GM12878 (cell line): ENCODE measurements at regions of chr3 and their contacts with region 1.

Region 1: DNA sequence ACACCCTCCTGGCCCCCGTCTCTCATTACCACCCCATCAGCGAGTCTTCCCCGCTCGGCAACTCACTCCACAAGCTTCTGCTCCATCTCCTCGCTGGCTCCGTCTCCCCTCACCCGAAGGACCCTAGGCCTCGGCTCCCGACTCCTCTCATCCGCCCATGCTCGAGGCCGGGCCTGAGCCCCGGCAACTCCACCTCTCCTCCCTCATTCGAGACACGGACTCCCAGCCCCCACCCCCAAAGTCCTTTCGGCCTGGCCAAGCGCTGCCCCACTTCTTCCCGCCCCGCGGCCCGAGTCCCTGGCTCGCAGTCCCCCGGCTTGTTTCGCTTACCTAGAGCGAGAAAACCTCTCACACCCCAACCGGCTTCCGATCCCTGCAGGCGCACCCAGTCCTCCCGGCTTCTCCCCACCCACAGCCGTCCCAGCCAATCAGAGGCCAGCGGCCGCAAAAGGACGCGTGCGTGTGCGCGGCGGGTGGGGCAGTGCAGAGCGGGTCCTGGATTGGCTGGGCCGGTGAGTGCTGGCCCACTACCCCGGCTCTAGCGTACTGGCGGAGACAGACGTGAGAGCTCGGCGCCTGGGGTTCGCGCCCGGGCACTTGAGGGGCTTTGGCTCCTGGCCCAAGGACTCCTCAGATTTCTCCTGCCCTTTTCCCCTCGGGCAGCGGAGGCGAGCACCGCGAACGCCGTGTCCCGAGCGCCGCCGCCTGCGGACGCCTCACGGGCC is at the start of gene HIGD1A:
- DNase-seq: peak; percentile 79
- ATAC-seq: peak; percentile 99
- H3K4me3 ChIP-seq: peak within 1 kb of the TSS; percentile 87
- H3K27ac ChIP-seq: peak within 1 kb of the TSS; percentile 66
- H3K4me1 ChIP-seq: no peaks in the 10 kb centered on the region; the same call in 1 of the 2 replicates
- H3K27me3 ChIP-seq: no peaks in the 10 kb centered on the region
- CTCF ChIP-seq: no peak
- EP300 ChIP-seq: 0 out of 4 replicates have a peak, but pooled peaks of 1 of the 2 experiments have one; percentile 28
- POLR2A ChIP-seq: peak; percentile 94
- RAD21 ChIP-seq: no peak
- polyA plus RNA-seq, gene HIGD1A: 405 to 487 TPM

Region 2: DNA sequence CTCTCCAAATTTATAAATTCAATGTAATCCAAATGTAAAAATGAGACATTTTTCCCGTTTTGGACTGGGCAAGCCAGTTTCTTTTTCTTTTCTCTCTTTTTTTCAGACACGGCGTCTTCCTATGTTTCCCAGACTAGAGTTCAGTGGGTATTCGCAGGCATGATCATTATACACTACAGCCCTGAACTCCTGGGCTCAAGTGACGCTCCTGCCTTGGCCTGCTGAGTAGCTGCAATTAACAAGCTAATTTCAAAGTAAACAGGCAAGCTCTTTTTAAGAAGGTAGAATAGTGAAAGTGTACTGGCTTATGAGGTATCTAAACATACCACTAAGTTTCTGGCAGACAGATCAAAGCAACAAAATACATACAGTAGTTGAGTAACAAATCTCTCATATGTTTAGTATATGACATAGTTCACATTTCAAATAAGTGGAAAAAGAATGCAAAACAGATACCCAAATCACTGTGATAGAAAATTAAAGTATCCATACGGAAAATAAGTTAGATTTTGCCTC is 13.5 kb before region 1 on chr3:
- CTCF ChIA-PET with region 1: interaction called, 6 read pairs
- POLR2A ChIA-PET with region 1: interaction called, 14 read pairs
- RAD21 ChIA-PET with region 1: interaction called, 3 read pairs
- SMC1A ChIA-PET with region 1: interaction called, 5 read pairs
- in situ Hi-C with region 1: no loop called
- intact Hi-C with region 1: no loop called
- DNase-seq: no peak
- ATAC-seq: peak; percentile 63
- H3K4me3 ChIP-seq: no peak overlapping the region
- H3K27ac ChIP-seq: no peak overlapping the region
- H3K4me1 ChIP-seq: no peaks in the 10 kb centered on the region
- H3K27me3 ChIP-seq: no peaks in the 10 kb centered on the region
- CTCF ChIP-seq: no peak
- EP300 ChIP-seq: no peak
- POLR2A ChIP-seq: no peak
- RAD21 ChIP-seq: no peak

Region 3: DNA sequence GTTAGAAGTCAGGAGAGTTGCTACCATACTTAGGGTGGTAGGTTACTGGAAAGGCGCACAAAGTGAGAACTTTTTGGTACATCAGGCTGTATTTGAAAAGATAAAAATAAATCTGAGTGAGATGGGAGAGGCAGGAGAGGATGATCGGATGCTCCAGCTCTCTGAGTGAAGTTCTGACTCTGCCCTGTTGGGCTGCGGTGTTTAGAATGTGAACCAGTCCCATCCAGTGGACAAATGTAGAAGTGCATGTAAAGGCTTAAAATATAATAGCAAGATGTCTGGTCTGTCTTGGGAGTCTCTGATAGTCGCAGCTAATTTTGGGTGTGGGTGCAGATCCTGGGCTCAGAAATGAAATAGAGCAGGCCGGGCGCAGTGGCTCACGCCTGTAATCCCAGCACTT is 35.3 kb after region 1 on chr3:
- CTCF ChIA-PET with region 1: interaction called, 15 read pairs
- POLR2A ChIA-PET with region 1: no interaction called
- RAD21 ChIA-PET with region 1: no interaction called
- SMC1A ChIA-PET with region 1: no interaction called
- in situ Hi-C with region 1: no loop called
- intact Hi-C with region 1: no loop called
- DNase-seq: peak; percentile 45
- ATAC-seq: peak; percentile 100
- H3K4me3 ChIP-seq: no peak overlapping the region; the same call in 1 of the 2 replicates
- H3K27ac ChIP-seq: no peak overlapping the region
- H3K4me1 ChIP-seq: no peaks in the 10 kb centered on the region
- H3K27me3 ChIP-seq: no peaks in the 10 kb centered on the region
- CTCF ChIP-seq: peak; percentile 69 to 80 (median 79)
- EP300 ChIP-seq: no peak
- POLR2A ChIP-seq: no peak
- RAD21 ChIP-seq: peak; percentile 71